K562 (cell line): ENCODE measurements at regions of chr12 and their contacts with region 1.

Region 1: DNA sequence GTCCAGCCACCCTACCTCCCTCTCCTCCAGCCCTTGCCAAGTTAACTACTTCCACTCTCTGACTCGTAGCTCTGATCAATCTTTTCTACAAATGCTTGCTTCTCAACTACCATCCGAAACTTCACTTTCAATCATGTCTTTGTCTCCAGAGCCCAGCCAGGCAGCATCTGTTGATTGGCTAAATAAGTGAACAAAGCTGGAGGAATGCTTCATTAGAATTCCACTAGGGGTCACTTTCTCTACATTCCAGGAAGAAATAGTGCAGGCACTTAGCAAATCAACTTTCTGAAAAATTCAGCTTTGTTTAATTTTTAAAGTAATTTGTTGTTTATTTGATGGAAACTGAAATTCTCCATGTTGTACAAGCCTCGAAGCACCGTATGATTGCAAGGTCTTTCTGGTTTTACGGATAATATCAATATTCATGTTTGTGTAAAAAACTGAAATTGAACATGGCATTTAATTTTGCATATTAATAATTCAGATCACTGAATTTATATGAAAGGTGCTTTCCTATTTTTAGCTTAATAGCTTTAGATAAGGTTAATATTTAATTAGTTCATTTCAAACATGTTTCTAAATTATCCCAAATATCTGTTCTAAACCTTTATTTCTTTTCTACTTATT is 32.4 kb upstream of the HELB start:
- DNase-seq: peak in 2 of 4 experiments; percentile 36 to 49
- ATAC-seq: peak; percentile 88
- H3K4me3 ChIP-seq: no peak overlapping the region
- H3K27ac ChIP-seq: no peak overlapping the region
- H3K4me1 ChIP-seq: no peaks in the 10 kb centered on the region; a peak in 2 of 5 replicates
- H3K27me3 ChIP-seq: peaks cover 0 to 2% of the 10 kb centered on the region in 2 experiments; a peak in 2 of 5 replicates
- CTCF ChIP-seq: peak; percentile 52 to 73 (median 59); a peak in 5 of 6 replicates
- EP300 ChIP-seq: no peak
- POLR2A ChIP-seq: no peak
- RAD21 ChIP-seq: peak; percentile 72 to 80

Region 2: DNA sequence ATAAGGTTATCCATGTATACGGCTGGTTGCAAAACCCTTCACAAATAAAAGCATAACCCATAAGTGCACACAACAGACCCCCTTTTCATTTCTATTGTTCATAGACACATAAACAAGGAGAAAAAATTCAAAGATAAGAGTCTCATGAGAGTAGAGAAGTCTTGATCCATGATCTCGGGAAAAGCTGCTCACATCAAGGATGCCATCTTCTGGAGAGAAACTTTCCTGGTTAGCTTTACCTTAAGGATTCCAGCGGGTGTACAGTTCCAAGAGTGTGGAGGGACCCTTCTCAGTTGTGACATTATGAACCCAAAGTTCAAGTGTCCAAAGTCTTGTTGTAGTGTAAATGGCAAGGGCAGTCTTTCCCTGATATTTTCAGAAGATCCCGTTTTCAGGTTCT is 283.8 kb before region 1 on chr12:
- CTCF ChIA-PET with region 1: no interaction called
- POLR2A ChIA-PET with region 1: no interaction called
- in situ Hi-C with region 1: no loop called
- intact Hi-C with region 1: no loop called
- DNase-seq: no peak
- ATAC-seq: no peak
- H3K4me3 ChIP-seq: no peak overlapping the region
- H3K27ac ChIP-seq: no peak overlapping the region
- H3K4me1 ChIP-seq: no peaks in the 10 kb centered on the region
- H3K27me3 ChIP-seq: no peaks in the 10 kb centered on the region
- CTCF ChIP-seq: no peak
- EP300 ChIP-seq: no peak
- POLR2A ChIP-seq: no peak
- RAD21 ChIP-seq: no peak

Region 3: DNA sequence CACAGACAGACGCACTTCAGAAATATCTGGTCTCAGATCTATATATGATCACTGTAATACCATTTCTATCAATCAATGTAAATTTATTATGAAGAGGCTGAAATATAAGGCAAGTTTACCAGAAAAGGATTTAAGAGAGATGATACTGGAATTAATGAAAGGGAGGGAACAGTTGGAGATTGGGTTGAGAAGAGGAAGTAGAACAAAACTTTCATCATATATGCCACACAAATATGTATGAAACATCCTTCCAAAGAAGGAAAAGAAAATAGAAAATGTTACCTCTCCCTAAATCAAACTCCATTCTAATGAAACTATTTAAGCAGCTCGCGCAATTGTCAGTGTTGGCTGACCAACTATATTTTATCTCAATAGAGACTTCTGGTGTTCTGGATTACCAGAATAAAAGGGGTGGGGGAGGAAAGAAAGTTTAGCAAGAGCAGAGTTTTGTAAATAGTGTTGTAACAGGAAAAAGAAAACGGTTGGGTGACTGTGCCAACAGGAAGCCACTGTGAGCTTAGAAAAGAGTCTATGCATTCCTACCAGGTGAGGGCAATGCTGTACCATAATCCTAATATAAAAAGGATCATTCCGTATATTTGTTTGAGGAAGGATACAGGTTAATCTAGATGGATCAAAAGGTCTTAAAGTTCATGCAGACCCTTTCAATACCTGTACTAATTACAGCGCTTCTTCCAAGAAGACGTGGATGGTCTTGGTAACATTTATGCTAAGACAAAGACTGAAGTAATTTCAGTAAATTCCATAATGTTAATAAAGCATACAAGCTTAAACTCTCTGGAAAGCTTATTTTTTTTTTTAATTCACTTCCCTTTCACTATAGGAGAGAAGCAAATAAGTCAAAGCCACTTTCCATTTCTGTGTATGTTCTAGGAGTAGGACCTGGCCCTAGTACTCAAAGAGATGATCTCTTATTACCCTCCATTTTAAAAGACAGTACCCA is 124.8 kb before region 1 on chr12:
- CTCF ChIA-PET with region 1: no interaction called
- POLR2A ChIA-PET with region 1: no interaction called
- in situ Hi-C with region 1: no loop called
- intact Hi-C with region 1: loop called (anchors 1 kb)
- DNase-seq: peak in 2 of 4 experiments; percentile 15 to 31
- ATAC-seq: peak; percentile 60
- H3K4me3 ChIP-seq: no peak overlapping the region
- H3K27ac ChIP-seq: no peak overlapping the region
- H3K4me1 ChIP-seq: peaks cover 0 to 7% of the 10 kb centered on the region in 2 experiments; a peak in 2 of 5 replicates
- H3K27me3 ChIP-seq: no peaks in the 10 kb centered on the region
- CTCF ChIP-seq: peak in 2 of 3 experiments; percentile 44 to 62; a peak in 3 of 6 replicates
- EP300 ChIP-seq: no peak
- POLR2A ChIP-seq: no peak
- RAD21 ChIP-seq: peak in 1 of 2 experiments; percentile 65; a peak in 3 of 4 replicates

Region 4: GRCh38 chr12:66345212-66345611 is 75.3 kb after region 1 on chr12:
- CTCF ChIA-PET with region 1: no interaction called
- POLR2A ChIA-PET with region 1: no interaction called
- in situ Hi-C with region 1: no loop called
- intact Hi-C with region 1: loop called (anchors 5 kb)
- DNase-seq: peak in 1 of 4 experiments; percentile 21
- ATAC-seq: no peak
- H3K4me3 ChIP-seq: no peak overlapping the region
- H3K27ac ChIP-seq: no peak overlapping the region
- H3K4me1 ChIP-seq: peaks cover 0 to 7% of the 10 kb centered on the region in 2 experiments; a peak in 2 of 5 replicates
- H3K27me3 ChIP-seq: no peaks in the 10 kb centered on the region
- CTCF ChIP-seq: no peak
- EP300 ChIP-seq: no peak
- POLR2A ChIP-seq: no peak
- RAD21 ChIP-seq: no peak

Region 5: DNA sequence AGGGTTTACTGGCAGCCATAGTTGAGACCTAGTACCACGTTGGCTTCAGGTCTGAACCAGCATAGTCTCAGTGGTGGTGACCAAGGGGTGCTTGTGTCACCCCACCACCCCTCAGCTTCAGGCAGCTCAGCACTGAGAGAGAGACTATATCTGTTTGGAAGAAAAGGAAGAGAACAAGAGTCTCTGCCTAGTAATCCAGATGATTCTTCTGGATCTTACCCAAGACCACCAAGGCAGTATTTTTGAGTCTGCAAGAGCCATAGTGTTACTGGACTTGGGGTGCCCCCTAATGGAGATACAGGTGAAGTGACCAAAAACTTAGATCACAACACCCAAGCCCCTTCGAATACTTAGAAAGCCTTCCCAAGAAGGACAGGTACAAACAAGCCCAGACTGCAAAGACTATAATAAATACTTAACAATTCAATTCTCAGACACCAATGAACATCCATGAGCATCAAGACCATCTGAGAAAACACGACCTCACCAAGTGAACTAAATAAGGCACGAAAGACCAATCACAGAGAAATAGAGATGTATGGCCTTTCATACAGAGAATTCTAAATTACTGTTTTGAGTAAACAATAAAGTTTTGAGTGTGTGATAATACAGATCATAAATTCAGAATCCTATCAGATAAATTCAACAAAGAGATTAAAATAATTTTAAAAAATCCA is 139.5 kb after region 1 on chr12:
- CTCF ChIA-PET with region 1: interaction called, 10 read pairs
- POLR2A ChIA-PET with region 1: no interaction called
- in situ Hi-C with region 1: loop called (anchors 5 kb)
- intact Hi-C with region 1: loop called (anchors 2 kb)
- DNase-seq: peak in 2 of 4 experiments; percentile 10 to 57
- ATAC-seq: peak; percentile 85
- H3K4me3 ChIP-seq: no peak overlapping the region
- H3K27ac ChIP-seq: no peak overlapping the region
- H3K4me1 ChIP-seq: no peaks in the 10 kb centered on the region
- H3K27me3 ChIP-seq: 0 out of 5 replicates have a peak, but pooled peaks cover 0 to 4% of the 10 kb centered on the region in 2 experiments
- CTCF ChIP-seq: peak; percentile 67 to 76 (median 76)
- EP300 ChIP-seq: no peak
- POLR2A ChIP-seq: no peak
- RAD21 ChIP-seq: peak; percentile 86 to 92

Region 6: GRCh38 chr12:66693901-66694675 is 424.2 kb after region 1 on chr12:
- CTCF ChIA-PET with region 1: interaction called, 3 read pairs
- POLR2A ChIA-PET with region 1: no interaction called
- in situ Hi-C with region 1: no loop called
- intact Hi-C with region 1: loop called (anchors 5 kb)
- DNase-seq: peak; percentile 36 to 63 (median 48)
- ATAC-seq: peak; percentile 86
- H3K4me3 ChIP-seq: no peak overlapping the region
- H3K27ac ChIP-seq: no peak overlapping the region
- H3K4me1 ChIP-seq: no peaks in the 10 kb centered on the region
- H3K27me3 ChIP-seq: no peaks in the 10 kb centered on the region
- CTCF ChIP-seq: peak; percentile 33 to 60 (median 52); a peak in 5 of 6 replicates
- EP300 ChIP-seq: no peak
- POLR2A ChIP-seq: no peak
- RAD21 ChIP-seq: peak; percentile 45 to 59